Breast epithelium (tissue), 4 donors: ENCODE measurements at regions of chr10 and their contacts with region 1.

Region 1: GRCh38 chr10:65213170-65213569 is 1692.0 kb downstream of the REEP3 start:
- DNase-seq: no peak
- H3K4me3 ChIP-seq: no peak overlapping the region
- H3K27ac ChIP-seq: no peak overlapping the region
- H3K4me1 ChIP-seq: no peaks in the 10 kb centered on the region
- H3K27me3 ChIP-seq: no peaks in the 10 kb centered on the region
- CTCF ChIP-seq: no peak
- POLR2A ChIP-seq: no peak

Region 2: GRCh38 chr10:65805993-65806392 is 592.8 kb after region 1 on chr10:
- intact Hi-C with region 1: loop called (anchors 10 kb)
- DNase-seq: no peak
- H3K4me3 ChIP-seq: no peak overlapping the region
- H3K27ac ChIP-seq: no peak overlapping the region
- H3K4me1 ChIP-seq: no peaks in the 10 kb centered on the region
- H3K27me3 ChIP-seq: no peaks in the 10 kb centered on the region
- CTCF ChIP-seq: no peak
- POLR2A ChIP-seq: no peak